Transverse colon (tissue), 4 donors: ENCODE measurements at regions of chr1 and their contacts with region 1.

Region 1: GRCh38 chr1:40665335-40666171 is at the start of gene RIMS3:
- DNase-seq: peak; percentile 87
- H3K4me3 ChIP-seq: peak within 1 kb of the TSS; percentile 55 to 68 (median 64)
- H3K27ac ChIP-seq: peak within 1 kb of the TSS; percentile 47 to 71 (median 56)
- H3K4me1 ChIP-seq: peaks cover 0 to 28% (median 14%) of the 10 kb centered on the region in 4 donors
- H3K27me3 ChIP-seq: no peaks in the 10 kb centered on the region
- CTCF ChIP-seq: peak in 1 of 5 experiments; percentile 11
- EP300 ChIP-seq: no peak
- POLR2A ChIP-seq: no peak
- total RNA-seq, gene RIMS3: 1.9 to 14.7 (median 5.4) TPM

Region 2: DNA sequence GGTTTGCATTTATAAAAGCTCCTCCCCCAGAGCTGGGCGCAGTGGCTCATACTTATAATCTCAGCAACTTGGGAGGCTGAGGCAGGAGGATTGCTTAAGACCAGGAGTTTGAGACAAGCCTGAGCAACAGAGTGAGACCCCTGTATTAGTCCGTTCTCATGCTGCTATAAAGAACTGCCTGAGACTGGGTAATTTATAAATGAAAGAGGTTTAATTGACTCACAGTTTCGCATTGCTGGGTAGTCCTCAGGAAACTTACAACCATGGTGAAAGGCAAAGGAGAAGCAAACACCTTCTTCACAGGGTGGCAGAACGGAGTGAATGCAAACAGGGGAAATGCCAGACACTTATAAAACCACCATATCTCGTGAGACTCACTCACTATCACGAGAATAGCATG is 81.6 kb before region 1 on chr1:
- in situ Hi-C with region 1: no loop called
- intact Hi-C with region 1: no loop called
- DNase-seq: no peak
- H3K4me3 ChIP-seq: no peak overlapping the region
- H3K27ac ChIP-seq: no peak overlapping the region
- H3K4me1 ChIP-seq: no peaks in the 10 kb centered on the region
- H3K27me3 ChIP-seq: no peaks in the 10 kb centered on the region
- CTCF ChIP-seq: no peak
- EP300 ChIP-seq: no peak
- POLR2A ChIP-seq: no peak

Region 3: DNA sequence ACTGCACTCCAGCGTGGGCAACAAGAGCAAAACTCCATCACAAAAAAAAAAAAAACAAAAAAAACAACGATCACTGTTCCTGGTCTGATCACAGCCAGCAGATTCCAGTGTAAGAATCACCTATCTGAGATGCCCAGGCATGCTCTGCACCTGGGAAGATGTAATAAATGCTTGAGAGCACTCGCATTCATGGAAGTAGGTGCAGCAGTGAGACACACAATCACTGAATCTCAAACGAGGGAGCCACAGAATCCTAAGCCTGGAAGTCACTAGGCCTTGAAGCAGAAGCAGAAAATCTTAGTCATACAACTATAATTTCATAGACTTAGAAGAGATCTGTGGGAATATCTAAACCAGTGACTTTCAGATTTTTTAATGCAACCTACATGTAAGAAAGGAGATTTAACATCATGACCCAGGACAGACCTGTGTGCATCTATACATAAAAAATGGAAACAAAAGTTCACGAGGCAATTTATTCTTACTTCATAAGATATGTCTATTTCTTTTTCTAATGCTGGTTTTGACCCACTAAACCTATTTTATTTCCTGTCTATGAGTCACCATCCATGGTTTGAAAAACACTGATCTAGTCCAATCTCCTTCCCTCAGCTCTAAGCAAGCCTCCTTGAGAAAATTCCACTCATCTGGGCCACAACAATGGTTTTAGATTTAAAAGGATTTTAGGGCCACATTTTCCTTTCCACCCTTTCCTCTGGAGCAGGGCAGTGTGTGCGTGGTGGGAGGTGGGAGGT is 30.5 kb before region 1 on chr1:
- in situ Hi-C with region 1: no loop called
- intact Hi-C with region 1: loop called (anchors 1 kb)
- DNase-seq: no peak
- H3K4me3 ChIP-seq: no peak overlapping the region
- H3K27ac ChIP-seq: no peak overlapping the region
- H3K4me1 ChIP-seq: peaks cover 0 to 13% (median 12%) of the 10 kb centered on the region in 4 donors
- H3K27me3 ChIP-seq: no peaks in the 10 kb centered on the region
- CTCF ChIP-seq: no peak
- EP300 ChIP-seq: no peak
- POLR2A ChIP-seq: no peak